A549 (cell line): ENCODE measurements at regions of chr12 and their contacts with region 1.

Region 1: DNA sequence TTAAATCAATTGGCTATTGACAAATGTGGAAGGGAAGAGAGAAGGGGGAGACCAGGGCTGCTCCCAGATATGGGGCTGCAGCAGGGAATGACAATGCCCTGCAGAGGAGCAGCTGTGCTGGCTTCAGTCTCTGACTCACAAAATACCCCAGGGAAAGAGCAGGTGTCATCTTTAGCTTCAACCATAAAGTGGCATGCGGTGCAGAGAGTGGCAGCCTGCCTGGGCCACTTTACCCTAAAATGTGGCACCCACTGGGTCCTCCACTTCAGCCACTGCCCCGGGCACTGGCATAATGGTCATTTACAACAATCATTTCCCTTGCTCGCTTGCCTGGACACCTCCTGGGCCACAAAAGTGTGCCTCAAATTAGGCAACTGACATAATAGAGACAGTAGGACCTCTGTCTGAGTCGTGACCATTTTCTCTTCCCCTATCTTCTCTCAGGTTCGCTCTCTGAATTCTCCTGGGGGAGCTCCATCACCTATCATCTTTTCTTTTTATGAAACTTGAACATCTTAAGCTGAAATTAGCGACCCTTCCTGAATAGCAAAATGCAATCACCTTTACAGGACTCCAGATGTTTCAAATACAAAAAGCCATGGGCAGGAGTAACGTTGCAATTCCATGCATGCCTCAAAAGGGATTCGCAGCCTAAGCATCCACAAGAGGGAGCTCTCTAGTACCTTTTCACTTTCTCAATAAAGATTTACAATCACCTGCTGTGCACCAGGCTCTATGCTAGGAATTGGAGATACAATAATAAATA is 179.9 kb upstream of the ATF7IP start:
- DNase-seq: peak; percentile 46 to 49
- ATAC-seq: peak; percentile 74 to 88
- H3K4me3 ChIP-seq: no peak overlapping the region
- H3K27ac ChIP-seq: no peak overlapping the region
- H3K4me1 ChIP-seq: no peaks in the 10 kb centered on the region
- CTCF ChIP-seq: peak; percentile 75
- EP300 ChIP-seq: no peak
- POLR2A ChIP-seq: no peak
- RAD21 ChIP-seq: peak; percentile 57 to 66; a peak in 4 of 5 replicates

Region 2: GRCh38 chr12:14175206-14175605 is 10.4 kb before region 1 on chr12:
- CTCF ChIA-PET with region 1: interaction called, 14 read pairs
- POLR2A ChIA-PET with region 1: no interaction called
- DNase-seq: no peak
- ATAC-seq: no peak
- H3K4me3 ChIP-seq: no peak overlapping the region
- H3K27ac ChIP-seq: no peak overlapping the region
- H3K4me1 ChIP-seq: no peaks in the 10 kb centered on the region
- CTCF ChIP-seq: no peak
- EP300 ChIP-seq: no peak
- POLR2A ChIP-seq: no peak
- RAD21 ChIP-seq: no peak

Region 3: GRCh38 chr12:14664510-14664909 is 478.9 kb after region 1 on chr12:
- CTCF ChIA-PET with region 1: interaction called, 10 read pairs
- POLR2A ChIA-PET with region 1: no interaction called
- DNase-seq: peak; percentile 8 to 58
- ATAC-seq: peak in 1 of 2 experiments; percentile 67; a peak in 2 of 6 replicates
- H3K4me3 ChIP-seq: no peak overlapping the region
- H3K27ac ChIP-seq: no peak overlapping the region
- H3K4me1 ChIP-seq: no peaks in the 10 kb centered on the region
- CTCF ChIP-seq: peak; percentile 63
- EP300 ChIP-seq: no peak
- POLR2A ChIP-seq: no peak
- RAD21 ChIP-seq: peak; percentile 70 to 79